Uterus (tissue), 4 donors: ENCODE measurements at regions of chr1 and their contacts with region 1.

Region 1: GRCh38 chr1:29245876-29246275 is 9.6 kb downstream of the PTPRU start:
- DNase-seq: no peak
- H3K4me3 ChIP-seq: no peak overlapping the region
- H3K27ac ChIP-seq: no peak overlapping the region
- H3K4me1 ChIP-seq: no peaks in the 10 kb centered on the region
- H3K27me3 ChIP-seq: no peaks in the 10 kb centered on the region
- CTCF ChIP-seq: peak in 1 of 4 experiments; percentile 15
- POLR2A ChIP-seq: no peak

Region 2: DNA sequence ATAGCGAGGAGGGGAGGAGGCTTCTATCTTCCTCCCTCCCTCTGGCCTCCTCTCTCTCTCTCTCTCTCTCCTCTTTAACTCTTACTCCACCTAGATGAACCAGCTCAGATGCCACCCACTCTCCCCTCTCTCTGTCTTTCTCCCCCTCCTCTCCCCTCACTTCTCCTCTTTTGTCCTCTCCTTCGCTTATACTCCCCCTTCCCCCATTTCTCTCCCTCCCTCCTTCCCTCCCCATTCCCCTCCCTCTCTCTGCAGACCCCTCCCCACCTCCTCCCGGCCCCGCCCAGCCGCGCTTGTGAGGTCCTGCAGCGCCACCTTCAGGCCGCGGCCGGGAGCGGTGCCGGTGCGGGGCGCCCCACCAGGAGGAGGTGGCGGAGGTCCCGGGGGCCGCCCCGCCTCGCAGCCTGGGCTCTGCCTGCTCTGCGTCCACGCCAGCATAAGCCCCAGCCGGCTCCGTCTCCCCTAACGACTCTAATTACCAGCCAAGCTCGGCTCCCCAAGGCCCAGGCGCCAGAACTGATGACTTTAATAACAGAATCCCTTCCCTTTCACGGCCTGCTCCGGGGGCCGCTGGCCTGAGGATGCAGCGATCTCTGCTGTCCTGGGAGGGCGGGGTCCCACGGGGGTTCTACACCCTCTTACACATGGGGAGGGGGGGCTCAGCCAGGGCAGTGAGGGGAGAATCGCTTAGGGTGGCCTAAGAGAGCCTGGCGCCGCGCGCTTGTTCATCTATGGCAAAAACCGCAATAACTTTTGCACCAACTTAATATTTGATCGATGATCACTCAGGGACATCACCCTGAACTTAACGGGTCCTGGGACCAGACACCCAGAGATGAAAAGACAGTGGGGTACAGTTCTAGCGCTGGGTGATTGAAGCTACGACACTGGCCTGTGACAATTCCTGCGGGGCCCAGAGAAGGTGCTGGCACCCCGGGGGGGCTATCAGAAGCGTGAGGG is 840.2 kb after region 1 on chr1:
- intact Hi-C with region 1: loop called (anchors 10 kb)
- DNase-seq: peak; percentile 51 to 64
- H3K4me3 ChIP-seq: no peak overlapping the region
- H3K27ac ChIP-seq: peak overlapping the region in 1 of 2 donors; percentile 42
- H3K4me1 ChIP-seq: no peaks in the 10 kb centered on the region
- H3K27me3 ChIP-seq: no peaks in the 10 kb centered on the region
- CTCF ChIP-seq: peak; percentile 51 to 82 (median 76)
- POLR2A ChIP-seq: no peak

Region 3: DNA sequence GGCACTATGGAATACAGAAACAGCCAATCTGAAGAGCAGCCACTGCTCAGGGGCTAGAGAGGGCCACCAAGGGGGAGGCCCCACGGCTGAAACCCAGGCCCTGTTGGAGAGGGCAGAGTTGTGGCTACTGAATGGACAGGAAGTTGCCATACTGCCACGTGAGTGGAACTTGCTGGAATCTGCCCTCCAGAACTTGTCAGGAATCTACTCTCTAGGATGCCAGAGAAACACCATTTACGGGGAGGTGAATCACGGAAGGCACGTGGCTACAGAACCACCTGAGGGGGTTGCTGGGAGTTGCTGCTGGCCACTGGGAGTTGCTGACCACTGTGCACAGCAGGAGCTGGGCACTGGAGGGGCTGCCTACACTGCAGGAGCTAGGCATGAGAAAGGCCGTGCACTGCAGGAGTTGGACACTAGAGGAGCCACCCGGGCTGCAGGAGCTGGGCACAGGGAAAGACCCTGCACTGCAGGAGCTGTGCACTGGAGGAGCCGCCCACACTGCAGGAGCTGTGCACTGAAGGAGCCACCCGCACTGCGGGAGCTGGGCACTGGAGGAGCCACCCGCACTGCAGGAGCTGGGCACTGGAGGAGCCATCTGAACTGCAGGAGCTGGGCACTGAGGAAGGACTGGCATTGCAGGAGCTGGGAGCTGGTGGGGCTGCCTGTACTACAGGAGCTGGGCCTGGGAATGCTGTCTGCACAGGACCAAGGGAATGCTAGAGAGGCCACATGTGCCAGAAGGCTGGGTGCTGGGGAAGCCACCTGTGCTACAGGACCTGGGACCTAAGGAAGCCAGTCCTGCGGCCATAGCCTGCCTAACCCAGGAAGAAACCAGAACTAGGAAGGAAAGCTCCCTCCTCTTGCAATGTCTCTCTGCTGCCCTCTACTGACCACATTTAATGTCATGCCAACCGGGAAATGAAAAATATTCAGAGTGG is 1134.1 kb after region 1 on chr1:
- intact Hi-C with region 1: loop called (anchors 10 kb)
- DNase-seq: peak; percentile 35 to 64
- H3K4me3 ChIP-seq: no peak overlapping the region
- H3K27ac ChIP-seq: no peak overlapping the region
- H3K4me1 ChIP-seq: peaks cover 0 to 5% of the 10 kb centered on the region in 2 donors
- H3K27me3 ChIP-seq: no peaks in the 10 kb centered on the region
- CTCF ChIP-seq: peak; percentile 80 to 84 (median 80)
- POLR2A ChIP-seq: no peak